Right ventricle myocardium inferior (tissue), 1 donor: ENCODE measurements at regions of chr9 and their contacts with region 1.

Region 1: GRCh38 chr9:75389101-75389500 is 300.8 kb downstream of the OSTF1 start:
- DNase-seq: no peak
- ATAC-seq: peak; percentile 10

Region 2: GRCh38 chr9:75429531-75430475 is 40.7 kb after region 1 on chr9:
- intact Hi-C with region 1: loop called (anchors 5 kb)
- DNase-seq: no peak
- ATAC-seq: no peak

Region 3: GRCh38 chr9:75918154-75918553 is 529.1 kb after region 1 on chr9:
- intact Hi-C with region 1: no loop called
- DNase-seq: no peak
- ATAC-seq: no peak